ENCODE measurements at regions of chr16 and their contacts with region 1.

Region 1: DNA sequence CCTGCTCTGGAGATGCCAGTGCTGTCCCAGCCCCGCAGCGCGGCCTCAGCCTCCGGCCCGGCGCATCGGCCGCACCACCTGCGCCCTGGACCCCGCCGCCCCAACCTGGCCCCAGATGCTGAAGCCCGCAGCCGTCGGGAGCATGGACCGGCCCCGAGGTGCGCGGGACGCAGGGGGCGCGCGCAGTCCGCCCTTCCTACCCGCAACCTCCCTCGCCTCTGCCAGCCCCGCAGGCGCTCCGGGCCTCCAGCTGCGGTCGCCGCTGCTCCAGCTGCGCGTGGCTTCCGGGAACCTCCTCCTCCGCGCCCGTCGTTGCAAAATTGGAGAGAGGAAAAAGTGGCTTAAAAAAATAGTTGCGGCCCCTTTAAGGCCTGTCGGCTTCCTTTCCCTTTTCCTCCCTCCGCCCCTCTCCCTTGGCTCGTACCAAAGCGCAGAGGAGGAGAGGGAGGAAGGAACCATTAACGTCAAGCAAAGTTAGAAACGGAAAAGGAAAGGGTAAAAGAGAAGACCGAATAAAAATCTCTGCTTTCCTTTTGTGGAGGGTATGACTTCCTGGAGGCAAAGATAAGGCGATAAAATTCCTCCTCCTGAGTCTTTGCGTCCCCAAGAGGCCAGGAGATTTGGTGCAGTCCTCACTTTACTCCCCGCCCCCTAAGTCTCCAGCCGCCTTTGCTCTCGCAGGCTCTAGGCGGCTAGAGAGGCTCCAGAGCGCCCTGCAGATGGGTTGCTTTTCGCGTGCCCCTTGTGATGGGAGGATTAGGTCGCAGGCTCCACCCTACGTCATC is at the start of gene CDIPT:
- DNase-seq: peak; percentile 91 to 96
- ATAC-seq: peak; percentile 97 to 99 (median 98)
- H3K4me3 ChIP-seq: peak within 1 kb of the TSS; percentile 65 to 99 (median 91)
- H3K27ac ChIP-seq: peak within 1 kb of the TSS; percentile 85 to 98 (median 94)
- H3K4me1 ChIP-seq: peaks cover 8 to 25% (median 19%) of the 10 kb centered on the region in 9 donors
- H3K27me3 ChIP-seq: no peaks in the 10 kb centered on the region
- CTCF ChIP-seq: peak; percentile 17 to 76 (median 52)
- total RNA-seq, gene CDIPT: 61.8 to 87.0 (median 72.7) TPM

Region 2: GRCh38 chr16:29961479-29962343 is 98.6 kb after region 1 on chr16 and contains the start of gene TMEM219:
- intact Hi-C with region 1: loop called in 1 of 10 experiments (anchors 5 kb)
- DNase-seq: peak; percentile 92 to 94
- ATAC-seq: peak; percentile 95 to 99 (median 97)
- H3K4me3 ChIP-seq: peak within 1 kb of the TSS; percentile 46 to 94 (median 81)
- H3K27ac ChIP-seq: peak within 1 kb of the TSS; percentile 93 to 98 (median 96)
- H3K4me1 ChIP-seq: peaks cover 0 to 35% (median 20%) of the 10 kb centered on the region in 9 donors
- H3K27me3 ChIP-seq: no peaks in the 10 kb centered on the region
- CTCF ChIP-seq: peak; percentile 29 to 69 (median 46)
- total RNA-seq, gene TMEM219: 53.0 to 105 (median 67.1) TPM

Region 3: DNA sequence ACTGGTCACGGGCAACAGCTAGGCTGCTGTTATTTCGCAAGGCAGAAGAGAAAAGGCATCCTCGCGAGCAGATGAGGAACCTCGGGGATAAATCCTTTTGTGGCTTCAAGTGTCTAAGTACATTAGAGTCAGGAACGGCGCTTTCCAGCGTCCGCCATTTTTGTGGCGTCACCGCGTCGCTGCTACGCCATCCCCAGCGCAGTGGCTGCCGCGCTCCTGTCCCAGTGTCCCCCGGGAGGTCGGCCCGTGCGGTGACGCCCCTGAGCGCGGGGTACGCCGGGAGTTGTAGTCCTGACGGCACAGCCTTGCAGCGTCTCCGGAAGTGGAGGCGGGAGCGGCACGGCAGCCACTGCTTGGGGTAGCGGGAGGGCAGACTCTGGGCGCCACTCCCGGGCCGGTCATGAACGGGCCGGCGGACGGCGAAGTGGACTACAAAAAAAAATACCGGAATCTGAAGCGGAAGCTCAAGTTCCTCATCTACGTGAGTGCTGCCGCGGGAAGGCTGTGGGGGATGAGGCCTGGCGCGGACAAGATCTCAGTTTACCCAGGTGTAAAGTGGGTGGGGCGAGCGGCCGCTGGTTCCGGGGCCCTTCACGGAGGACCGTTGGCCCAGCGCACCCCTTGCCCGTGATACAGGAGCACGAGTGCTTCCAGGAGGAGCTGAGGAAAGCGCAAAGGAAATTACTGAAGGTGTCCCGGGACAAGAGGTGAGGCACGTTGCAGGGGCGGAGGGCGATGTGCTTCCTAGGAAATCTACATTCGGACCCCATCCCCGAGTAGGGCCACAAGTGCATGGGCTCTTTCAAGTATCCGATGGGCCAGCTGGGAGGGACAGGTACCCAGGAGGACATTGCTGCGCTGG is 133.1 kb after region 1 on chr16 and contains the start of gene INO80E:
- intact Hi-C with region 1: loop called in 4 of 10 experiments (anchors 5 to 10 kb)
- DNase-seq: peak; percentile 99 to 100
- ATAC-seq: peak; percentile 98 to 99 (median 99)
- H3K4me3 ChIP-seq: peak within 1 kb of the TSS; percentile 55 to 97 (median 82)
- H3K27ac ChIP-seq: peak within 1 kb of the TSS; percentile 87 to 99 (median 96)
- H3K4me1 ChIP-seq: peaks cover 7 to 40% (median 28%) of the 10 kb centered on the region in 9 donors
- H3K27me3 ChIP-seq: no peaks in the 10 kb centered on the region
- CTCF ChIP-seq: peak in 1 of 9 donors; percentile 18
- total RNA-seq, gene INO80E: 23.2 to 34.8 (median 30.6) TPM

Region 4: DNA sequence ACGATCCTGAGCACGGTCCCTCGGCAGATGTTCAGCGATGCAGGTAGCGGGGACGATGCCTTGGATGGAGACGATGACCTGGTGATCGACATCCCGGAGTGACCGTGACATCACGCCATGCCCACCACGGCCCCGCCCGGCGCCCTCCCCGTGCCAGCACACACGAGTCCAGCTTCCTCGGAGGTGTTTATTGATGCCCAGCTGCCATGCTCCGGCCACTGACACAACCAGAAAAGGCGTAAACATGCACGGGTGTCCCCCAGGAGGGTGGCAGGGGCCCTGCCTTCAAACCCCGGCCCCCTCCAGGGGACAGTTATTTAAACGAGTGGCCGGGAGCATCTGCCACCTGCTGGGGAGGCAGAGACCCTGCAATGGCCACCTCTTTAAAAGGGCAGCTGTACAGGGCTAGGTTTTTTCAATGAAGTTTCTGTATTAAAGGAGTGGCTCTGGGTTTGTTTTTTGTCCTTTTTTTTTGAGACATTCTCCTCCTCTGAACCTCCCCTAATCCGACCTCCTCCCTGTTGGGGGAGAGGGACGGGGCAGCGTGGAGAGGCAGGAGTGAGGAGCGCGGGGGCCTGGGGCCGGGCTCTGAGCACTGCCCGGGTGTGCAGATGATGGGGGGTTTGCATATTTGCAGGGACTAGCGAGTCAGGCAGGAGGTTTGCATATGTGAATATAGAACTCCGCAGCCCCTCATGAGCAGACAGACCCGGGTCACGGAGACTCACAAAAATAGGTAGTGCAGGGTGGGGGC is 142.4 kb after region 1 on chr16:
- intact Hi-C with region 1: loop called in 4 of 10 experiments (anchors 5 to 10 kb)
- DNase-seq: no peak
- ATAC-seq: peak in 7 of 8 donors; percentile 42 to 73 (median 66)
- H3K4me3 ChIP-seq: no peak overlapping the region
- H3K27ac ChIP-seq: no peak overlapping the region
- H3K4me1 ChIP-seq: peaks cover 0 to 13% (median 4%) of the 10 kb centered on the region in 9 donors
- H3K27me3 ChIP-seq: peaks cover 13 to 28% (median 25%) of the 10 kb centered on the region in 7 donors
- CTCF ChIP-seq: peak; percentile 77 to 88 (median 84)

Region 5: GRCh38 chr16:30028438-30029076 is 165.5 kb after region 1 on chr16:
- intact Hi-C with region 1: loop called in 1 of 10 experiments (anchors 5 kb)
- DNase-seq: no peak
- ATAC-seq: peak in 4 of 8 donors; percentile 37 to 65 (median 54)
- H3K4me3 ChIP-seq: no peak overlapping the region
- H3K27ac ChIP-seq: no peak overlapping the region
- H3K4me1 ChIP-seq: peaks cover 0 to 10% (median 6%) of the 10 kb centered on the region in 9 donors
- H3K27me3 ChIP-seq: peaks cover 4 to 83% (median 74%) of the 10 kb centered on the region in 7 donors
- CTCF ChIP-seq: no peak